Ovary (tissue), 10 donors: ENCODE measurements at regions of chr22 and their contacts with region 1.

Region 1: DNA sequence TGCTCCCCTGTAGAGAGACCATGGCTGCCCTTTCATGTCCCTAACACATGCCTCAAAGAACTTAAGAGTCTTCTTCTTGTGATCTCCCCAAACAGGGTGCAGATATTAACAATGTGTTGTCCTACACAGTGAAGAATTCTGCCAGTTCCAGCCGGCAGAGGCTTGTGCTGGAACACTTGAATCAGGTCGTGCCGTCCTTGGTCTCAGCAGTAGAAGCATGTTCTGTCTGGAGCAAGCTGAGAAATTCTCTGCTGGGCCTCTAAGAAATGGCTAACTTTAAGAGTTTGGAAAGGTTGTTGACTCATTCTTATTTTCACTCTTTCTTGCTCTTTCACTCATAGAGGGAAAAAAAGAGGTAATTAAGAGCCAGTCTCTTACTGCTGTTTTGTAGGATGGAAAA is 71.1 kb upstream of the SLC25A18 start:
- DNase-seq: peak in 2 of 5 donors; percentile 28 to 36
- H3K4me3 ChIP-seq: no peak overlapping the region
- H3K27ac ChIP-seq: peak overlapping the region in 1 of 2 donors; percentile 17
- H3K4me1 ChIP-seq: no peaks in the 10 kb centered on the region
- H3K27me3 ChIP-seq: no peaks in the 10 kb centered on the region
- CTCF ChIP-seq: no peak
- EP300 ChIP-seq: no peak
- POLR2A ChIP-seq: no peak

Region 2: GRCh38 chr22:17095538-17095937 is 396.7 kb before region 1 on chr22:
- intact Hi-C with region 1: loop called in 1 of 4 experiments (anchors 10 kb)
- DNase-seq: no peak
- H3K4me3 ChIP-seq: no peak overlapping the region
- H3K27ac ChIP-seq: no peak overlapping the region
- H3K4me1 ChIP-seq: no peaks in the 10 kb centered on the region
- H3K27me3 ChIP-seq: no peaks in the 10 kb centered on the region
- CTCF ChIP-seq: no peak
- EP300 ChIP-seq: no peak
- POLR2A ChIP-seq: no peak

Region 3: GRCh38 chr22:17536269-17536668 is 44.0 kb after region 1 on chr22:
- intact Hi-C with region 1: no loop called
- DNase-seq: no peak
- H3K4me3 ChIP-seq: no peak overlapping the region
- H3K27ac ChIP-seq: no peak overlapping the region
- H3K4me1 ChIP-seq: no peaks in the 10 kb centered on the region
- H3K27me3 ChIP-seq: no peaks in the 10 kb centered on the region
- CTCF ChIP-seq: no peak
- EP300 ChIP-seq: no peak
- POLR2A ChIP-seq: no peak